ENCODE measurements at regions of chr4 and their contacts with region 1.

Region 1: DNA sequence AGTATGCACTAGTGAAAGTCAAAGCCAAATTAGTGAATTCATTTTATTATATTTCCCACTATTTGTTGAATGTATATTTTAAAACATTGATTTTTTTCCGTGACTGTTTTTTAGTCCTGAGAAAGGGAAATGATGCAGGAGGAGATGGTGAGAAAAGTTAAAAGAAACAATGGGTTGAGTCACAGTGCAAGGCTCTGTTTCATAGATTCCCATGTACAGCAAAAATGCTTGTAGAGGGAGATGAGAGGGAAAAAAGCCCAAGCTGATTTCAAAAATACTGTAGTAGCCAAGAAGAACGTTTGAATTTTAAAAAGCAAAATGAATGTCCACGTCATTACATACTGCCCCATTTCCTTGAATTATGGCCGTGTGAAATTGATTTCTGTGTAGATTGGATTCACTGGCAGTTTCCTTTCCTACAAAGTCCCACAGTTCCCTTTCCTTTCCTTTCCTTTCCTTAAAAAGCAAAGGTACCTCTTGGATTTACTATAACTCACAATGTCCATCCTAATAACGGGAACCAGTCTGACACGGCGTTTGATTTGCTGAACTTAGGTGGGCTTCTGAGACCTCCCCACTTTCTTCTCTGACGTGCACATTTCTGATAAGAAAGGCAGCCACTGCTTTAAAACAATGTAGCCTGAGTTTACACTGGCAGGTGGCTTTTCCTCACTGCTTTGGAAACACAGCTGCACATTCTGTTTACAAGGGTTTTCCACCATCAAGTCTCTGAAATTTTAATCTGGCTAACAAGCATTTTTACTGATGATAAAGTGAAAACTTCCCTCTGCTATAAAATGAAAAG is 63.7 kb downstream of the SPCS3 start:
- DNase-seq: peak; percentile 95
- H3K4me3 ChIP-seq: peak overlapping the region; percentile 8 to 46 (median 30)
- H3K27ac ChIP-seq: peak overlapping the region; percentile 96
- H3K4me1 ChIP-seq: peaks cover 13% of the 10 kb centered on the region
- H3K27me3 ChIP-seq: no peaks in the 10 kb centered on the region
- CTCF ChIP-seq: no peak
- POLR2A ChIP-seq: no peak

Region 2: DNA sequence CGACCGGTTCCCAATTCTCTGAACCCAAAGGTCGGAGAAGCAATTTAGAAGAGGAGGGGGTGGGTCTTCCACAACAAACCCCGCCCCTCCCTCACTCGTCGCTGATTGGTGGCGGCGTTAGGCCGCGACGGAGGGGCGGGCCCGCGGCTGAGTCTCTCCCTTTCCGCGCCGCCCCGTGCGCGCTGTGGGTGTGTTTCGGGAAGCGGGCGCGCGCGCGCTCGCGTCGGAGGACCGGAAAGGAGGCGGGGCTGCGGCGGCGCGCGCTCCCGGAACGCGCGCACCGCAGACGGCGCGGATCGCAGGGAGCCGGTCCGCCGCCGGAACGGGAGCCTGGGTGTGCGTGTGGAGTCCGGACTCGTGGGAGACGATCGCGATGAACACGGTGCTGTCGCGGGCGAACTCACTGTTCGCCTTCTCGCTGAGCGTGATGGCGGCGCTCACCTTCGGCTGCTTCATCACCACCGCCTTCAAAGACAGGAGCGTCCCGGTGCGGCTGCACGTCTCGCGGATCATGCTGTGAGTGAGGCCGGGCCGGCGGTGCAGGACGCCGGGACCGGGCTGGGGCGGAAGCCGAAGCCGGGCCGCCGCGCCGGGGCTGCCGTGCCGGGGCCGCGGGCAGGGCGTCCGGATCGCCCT is 63.7 kb before region 1 on chr4 and contains the start of gene SPCS3:
- CTCF ChIA-PET with region 1: no interaction called
- POLR2A ChIA-PET with region 1: no interaction called
- dilution Hi-C with region 1: no loop called
- intact Hi-C with region 1: loop called (anchors 2 kb)
- DNase-seq: peak; percentile 95
- H3K4me3 ChIP-seq: peak within 1 kb of the TSS; percentile 51 to 85 (median 74)
- H3K27ac ChIP-seq: peak within 1 kb of the TSS; percentile 99
- H3K4me1 ChIP-seq: peaks cover 20% of the 10 kb centered on the region
- H3K27me3 ChIP-seq: no peaks in the 10 kb centered on the region
- CTCF ChIP-seq: no peak
- POLR2A ChIP-seq: peak; percentile 95
- total RNA-seq, gene SPCS3: 179 and 183 TPM in 2 replicates

Region 3: GRCh38 chr4:176451445-176451844 is 68.0 kb after region 1 on chr4:
- CTCF ChIA-PET with region 1: no interaction called
- POLR2A ChIA-PET with region 1: no interaction called
- dilution Hi-C with region 1: no loop called
- intact Hi-C with region 1: no loop called
- DNase-seq: no peak
- H3K4me3 ChIP-seq: no peak overlapping the region
- H3K27ac ChIP-seq: no peak overlapping the region
- H3K4me1 ChIP-seq: no peaks in the 10 kb centered on the region
- H3K27me3 ChIP-seq: no peaks in the 10 kb centered on the region
- CTCF ChIP-seq: no peak
- POLR2A ChIP-seq: no peak

Region 4: GRCh38 chr4:176635372-176636261 is 252.1 kb after region 1 on chr4:
- CTCF ChIA-PET with region 1: interaction called, 4 read pairs
- POLR2A ChIA-PET with region 1: no interaction called
- dilution Hi-C with region 1: no loop called
- intact Hi-C with region 1: loop called (anchors 5 kb)
- DNase-seq: peak; percentile 68
- H3K4me3 ChIP-seq: no peak overlapping the region
- H3K27ac ChIP-seq: peak overlapping the region; percentile 20
- H3K4me1 ChIP-seq: peaks cover 7% of the 10 kb centered on the region
- H3K27me3 ChIP-seq: no peaks in the 10 kb centered on the region
- CTCF ChIP-seq: no peak
- POLR2A ChIP-seq: no peak

Region 5: DNA sequence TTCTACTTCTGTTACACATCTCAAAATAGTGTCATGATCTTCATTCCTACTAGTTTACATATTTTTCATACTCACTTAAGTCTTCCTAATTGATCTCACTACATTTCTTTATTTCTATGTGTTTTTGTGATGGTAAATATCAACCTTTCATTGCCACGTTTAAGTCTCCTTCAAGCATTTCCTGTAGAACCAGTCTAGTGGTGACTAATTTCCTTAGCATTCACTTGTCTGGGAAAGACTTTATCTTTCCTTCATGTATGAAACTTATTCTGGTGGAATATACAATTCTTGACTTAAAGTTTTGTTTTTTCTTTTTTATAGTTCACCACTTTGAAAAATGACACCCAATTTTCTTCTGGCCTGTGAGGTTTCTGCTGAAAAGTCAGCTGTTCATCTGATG is 744.8 kb after region 1 on chr4:
- CTCF ChIA-PET with region 1: no interaction called
- POLR2A ChIA-PET with region 1: no interaction called
- dilution Hi-C with region 1: no loop called
- intact Hi-C with region 1: loop called (anchors 1 kb)
- DNase-seq: peak; percentile 77
- H3K4me3 ChIP-seq: peak overlapping the region in 1 of 3 experiments; percentile 10
- H3K27ac ChIP-seq: peak overlapping the region; percentile 77
- H3K4me1 ChIP-seq: peaks cover 19% of the 10 kb centered on the region
- H3K27me3 ChIP-seq: no peaks in the 10 kb centered on the region
- CTCF ChIP-seq: no peak
- POLR2A ChIP-seq: no peak

Region 6: DNA sequence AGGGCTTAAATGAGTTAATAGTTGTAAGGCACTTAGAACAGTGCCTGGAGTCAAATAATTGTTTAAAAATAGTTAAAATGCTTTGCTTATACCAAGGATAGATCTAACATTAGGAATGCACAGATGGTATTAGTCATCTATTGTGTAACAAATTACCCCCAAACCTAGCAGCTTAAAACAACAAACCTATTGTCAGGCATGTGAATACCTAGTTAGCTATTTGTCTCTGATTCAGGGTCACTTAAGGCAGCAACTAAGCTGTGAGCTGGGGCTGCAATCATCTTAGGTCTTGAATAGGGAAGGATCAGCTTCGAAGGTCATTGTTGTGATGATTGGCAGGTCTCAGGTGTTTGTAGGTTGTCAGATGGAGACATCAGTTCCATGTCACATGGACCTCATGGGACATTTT is 1101.1 kb after region 1 on chr4:
- CTCF ChIA-PET with region 1: no interaction called
- POLR2A ChIA-PET with region 1: no interaction called
- dilution Hi-C with region 1: no loop called
- intact Hi-C with region 1: loop called (anchors 1 kb)
- DNase-seq: peak; percentile 30
- H3K4me3 ChIP-seq: no peak overlapping the region
- H3K27ac ChIP-seq: peak overlapping the region; percentile 50
- H3K4me1 ChIP-seq: peaks cover 23% of the 10 kb centered on the region
- H3K27me3 ChIP-seq: no peaks in the 10 kb centered on the region
- CTCF ChIP-seq: no peak
- POLR2A ChIP-seq: no peak